Naive thymus-derived CD8-positive, alpha-beta T cell (primary cell): ENCODE measurements at regions of chr1 and their contacts with region 1.

Region 1: DNA sequence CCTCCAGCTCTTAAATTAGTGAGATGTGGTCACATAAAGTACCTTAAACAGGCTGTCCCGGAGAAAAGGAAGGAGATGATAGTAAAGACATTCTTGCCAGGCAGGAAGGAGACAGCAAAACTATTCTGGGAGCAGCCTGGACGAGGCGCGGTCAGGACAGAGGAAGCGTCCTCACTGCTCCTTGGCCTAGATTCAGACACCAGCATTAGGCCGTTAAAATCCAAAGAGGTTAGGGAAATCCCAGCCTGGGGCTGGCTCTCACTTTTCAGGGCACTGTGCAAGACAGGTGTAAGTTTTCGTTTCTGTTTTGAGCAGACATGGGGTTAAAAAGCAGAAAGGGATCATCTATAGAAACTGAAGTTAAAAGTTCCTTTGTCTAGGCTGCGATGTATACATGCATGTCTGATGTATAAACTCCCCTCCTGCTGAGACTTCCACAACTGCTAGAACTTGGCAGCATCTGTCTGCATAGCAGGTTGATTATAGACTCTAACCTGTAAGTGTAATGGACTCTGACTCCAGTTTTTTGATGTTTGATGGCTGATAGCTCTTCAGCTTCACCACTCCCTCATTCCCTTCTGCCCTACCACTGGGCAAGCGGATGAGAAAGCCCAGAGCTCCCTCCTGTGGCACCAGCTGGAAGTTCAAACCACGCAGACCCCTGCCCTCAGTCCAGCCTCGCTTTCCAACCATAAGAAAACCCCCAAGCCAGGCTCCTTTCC is 21.5 kb downstream of the STPG1 start:
- DNase-seq: peak in 8 of 10 donors; percentile 25 to 67 (median 44)
- ATAC-seq: peak; percentile 63 to 73
- H3K4me3 Mint-ChIP-seq: peak overlapping the region in 8 of 10 donors; percentile 48 to 85 (median 76)
- H3K27ac Mint-ChIP-seq: peak overlapping the region; percentile 76 to 95 (median 94)
- H3K4me1 Mint-ChIP-seq: peaks cover 18 to 33% (median 30%) of the 10 kb centered on the region in 4 donors
- H3K27me3 Mint-ChIP-seq: no peaks in the 10 kb centered on the region

Region 2: GRCh38 chr1:24201941-24202440 is 190.1 kb before region 1 on chr1:
- POLR2A ChIA-PET with region 1: interaction called, 16 read pairs
- DNase-seq: peak in 8 of 10 donors; percentile 23 to 52 (median 44)
- ATAC-seq: peak in 1 of 2 donors; percentile 37
- H3K4me3 Mint-ChIP-seq: no peak overlapping the region
- H3K27ac Mint-ChIP-seq: peak overlapping the region in 2 of 10 donors; percentile 27 to 85
- H3K4me1 Mint-ChIP-seq: peaks cover 0 to 10% (median 8%) of the 10 kb centered on the region in 4 donors
- H3K27me3 Mint-ChIP-seq: peaks cover 0 to 3% (median 0%) of the 10 kb centered on the region in 5 donors

Region 3: GRCh38 chr1:24248859-24249258 is 143.2 kb before region 1 on chr1:
- POLR2A ChIA-PET with region 1: no interaction called
- DNase-seq: no peak
- ATAC-seq: no peak
- H3K4me3 Mint-ChIP-seq: no peak overlapping the region
- H3K27ac Mint-ChIP-seq: no peak overlapping the region
- H3K4me1 Mint-ChIP-seq: peaks cover 0 to 5% (median 1%) of the 10 kb centered on the region in 4 donors
- H3K27me3 Mint-ChIP-seq: peaks cover 0 to 4% (median 0%) of the 10 kb centered on the region in 5 donors